Caco-2 (cell line): ENCODE measurements at regions of chr6 and their contacts with region 1.

Region 1: GRCh38 chr6:144334131-144334708 is 49.1 kb downstream of the UTRN start:
- DNase-seq: no peak
- H3K4me3 ChIP-seq: no peak overlapping the region
- H3K4me3 Mint-ChIP-seq: no peak overlapping the region
- H3K27ac Mint-ChIP-seq: no peak overlapping the region
- H3K4me1 ChIP-seq: peaks cover 52% of the 10 kb centered on the region
- H3K4me1 Mint-ChIP-seq: peaks cover 60% of the 10 kb centered on the region
- H3K27me3 ChIP-seq: no peaks in the 10 kb centered on the region
- H3K27me3 Mint-ChIP-seq: no peaks in the 10 kb centered on the region
- CTCF ChIP-seq: no peak

Region 2: GRCh38 chr6:144063744-144064401 is 270.3 kb before region 1 on chr6:
- CTCF ChIA-PET with region 1: no interaction called
- POLR2A ChIA-PET with region 1: no interaction called
- intact Hi-C with region 1: no loop called
- DNase-seq: peak; percentile 83 to 89
- H3K4me3 ChIP-seq: peak overlapping the region; percentile 80
- H3K4me3 Mint-ChIP-seq: peak overlapping the region; percentile 90
- H3K27ac Mint-ChIP-seq: no peak overlapping the region
- H3K4me1 ChIP-seq: peaks cover 3% of the 10 kb centered on the region; the same call in 1 of the 2 replicates
- H3K4me1 Mint-ChIP-seq: no peaks in the 10 kb centered on the region
- H3K27me3 ChIP-seq: no peaks in the 10 kb centered on the region; the same call in 1 of the 2 replicates
- H3K27me3 Mint-ChIP-seq: peaks cover 31% of the 10 kb centered on the region
- CTCF ChIP-seq: peak in 1 of 2 experiments; percentile 21

Region 3: DNA sequence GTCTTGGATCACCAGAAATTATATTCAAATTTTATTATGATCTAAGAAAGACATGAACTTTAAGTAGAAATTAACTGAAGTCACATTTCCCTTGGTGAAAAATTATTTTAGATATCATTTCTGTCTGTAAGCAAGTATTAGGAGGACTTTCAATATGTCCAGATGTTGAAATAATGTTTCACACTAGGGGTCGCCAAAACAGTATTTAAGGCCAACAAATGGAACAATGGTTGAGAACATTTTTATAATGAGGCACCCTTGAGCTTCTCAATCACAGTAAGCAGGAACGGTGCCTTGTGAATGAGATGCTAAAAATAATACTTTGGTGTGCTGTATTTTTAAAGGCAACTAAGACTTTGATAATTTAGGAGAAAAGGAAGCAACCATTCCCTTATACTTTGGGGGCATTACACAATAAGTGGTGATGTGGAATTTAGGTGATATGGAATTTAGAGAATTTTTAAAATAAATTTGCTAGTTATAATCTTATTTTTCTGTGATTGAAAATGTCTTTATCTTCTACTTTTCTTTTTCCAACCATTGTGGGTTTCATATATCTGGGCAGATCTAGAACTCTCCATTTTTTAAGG is 229.2 kb before region 1 on chr6:
- CTCF ChIA-PET with region 1: no interaction called
- POLR2A ChIA-PET with region 1: no interaction called
- intact Hi-C with region 1: loop called (anchors 10 kb)
- DNase-seq: peak in 1 of 2 experiments; percentile 67
- H3K4me3 ChIP-seq: no peak overlapping the region
- H3K4me3 Mint-ChIP-seq: no peak overlapping the region
- H3K27ac Mint-ChIP-seq: no peak overlapping the region
- H3K4me1 ChIP-seq: no peaks in the 10 kb centered on the region
- H3K4me1 Mint-ChIP-seq: peaks cover 16% of the 10 kb centered on the region
- H3K27me3 ChIP-seq: no peaks in the 10 kb centered on the region
- H3K27me3 Mint-ChIP-seq: no peaks in the 10 kb centered on the region
- CTCF ChIP-seq: peak; percentile 55 to 81

Region 4: DNA sequence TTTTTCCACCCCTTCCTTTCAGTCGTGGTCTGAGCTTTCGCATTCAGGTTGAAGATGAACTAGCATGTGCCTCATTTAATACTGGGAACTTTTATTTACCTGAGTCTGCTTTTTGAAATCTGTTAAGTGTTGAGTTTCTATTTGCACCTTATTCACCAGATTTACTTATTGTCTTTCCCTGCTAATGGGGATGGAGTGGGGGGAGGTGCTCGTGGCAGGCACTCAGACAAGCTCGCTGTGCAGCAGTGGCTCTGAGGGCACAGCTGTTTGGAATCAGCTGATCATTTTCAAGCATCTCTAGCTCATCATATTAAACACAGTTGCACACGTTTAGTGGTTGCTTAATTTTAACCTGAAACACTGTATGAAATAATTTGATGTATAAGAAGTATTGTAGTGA is 13.5 kb before region 1 on chr6:
- CTCF ChIA-PET with region 1: no interaction called
- POLR2A ChIA-PET with region 1: no interaction called
- intact Hi-C with region 1: loop called (anchors 1 kb)
- DNase-seq: no peak
- H3K4me3 ChIP-seq: no peak overlapping the region
- H3K4me3 Mint-ChIP-seq: no peak overlapping the region
- H3K27ac Mint-ChIP-seq: peak overlapping the region; percentile 42
- H3K4me1 ChIP-seq: peaks cover 33% of the 10 kb centered on the region
- H3K4me1 Mint-ChIP-seq: peaks cover 16% of the 10 kb centered on the region
- H3K27me3 ChIP-seq: no peaks in the 10 kb centered on the region
- H3K27me3 Mint-ChIP-seq: no peaks in the 10 kb centered on the region
- CTCF ChIP-seq: no peak

Region 5: DNA sequence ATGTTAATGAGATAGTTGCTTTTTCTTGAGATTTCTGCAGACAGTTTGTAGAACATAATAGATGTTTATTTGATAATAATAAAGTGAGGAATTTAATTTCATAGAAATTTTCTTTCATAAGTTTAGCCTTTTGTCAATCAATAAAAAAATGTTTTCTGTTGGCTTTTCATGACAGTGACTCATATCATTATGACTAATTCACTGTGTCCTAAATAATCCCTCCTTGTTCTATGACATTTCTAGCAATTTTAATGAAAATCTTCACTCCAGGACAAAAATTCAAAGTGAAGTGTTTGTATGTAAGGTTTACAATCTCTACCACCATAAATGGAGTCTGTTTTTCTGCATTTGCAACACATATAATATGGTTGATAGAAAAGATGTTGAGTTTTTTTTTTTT is 60.8 kb after region 1 on chr6:
- CTCF ChIA-PET with region 1: no interaction called
- POLR2A ChIA-PET with region 1: no interaction called
- intact Hi-C with region 1: no loop called
- DNase-seq: no peak
- H3K4me3 ChIP-seq: no peak overlapping the region
- H3K4me3 Mint-ChIP-seq: no peak overlapping the region
- H3K27ac Mint-ChIP-seq: no peak overlapping the region
- H3K4me1 ChIP-seq: no peaks in the 10 kb centered on the region
- H3K4me1 Mint-ChIP-seq: no peaks in the 10 kb centered on the region
- H3K27me3 ChIP-seq: no peaks in the 10 kb centered on the region
- H3K27me3 Mint-ChIP-seq: no peaks in the 10 kb centered on the region
- CTCF ChIP-seq: no peak

Region 6: GRCh38 chr6:144423167-144423566 is 88.9 kb after region 1 on chr6:
- CTCF ChIA-PET with region 1: no interaction called
- POLR2A ChIA-PET with region 1: no interaction called
- intact Hi-C with region 1: no loop called
- DNase-seq: no peak
- H3K4me3 ChIP-seq: no peak overlapping the region
- H3K4me3 Mint-ChIP-seq: no peak overlapping the region
- H3K27ac Mint-ChIP-seq: no peak overlapping the region
- H3K4me1 ChIP-seq: peaks cover 4% of the 10 kb centered on the region; the same call in 1 of the 2 replicates
- H3K4me1 Mint-ChIP-seq: no peaks in the 10 kb centered on the region
- H3K27me3 ChIP-seq: no peaks in the 10 kb centered on the region
- H3K27me3 Mint-ChIP-seq: no peaks in the 10 kb centered on the region
- CTCF ChIP-seq: no peak